Right cardiac atrium (tissue), 5 donors: ENCODE measurements at regions of chr9 and their contacts with region 1.

Region 1: DNA sequence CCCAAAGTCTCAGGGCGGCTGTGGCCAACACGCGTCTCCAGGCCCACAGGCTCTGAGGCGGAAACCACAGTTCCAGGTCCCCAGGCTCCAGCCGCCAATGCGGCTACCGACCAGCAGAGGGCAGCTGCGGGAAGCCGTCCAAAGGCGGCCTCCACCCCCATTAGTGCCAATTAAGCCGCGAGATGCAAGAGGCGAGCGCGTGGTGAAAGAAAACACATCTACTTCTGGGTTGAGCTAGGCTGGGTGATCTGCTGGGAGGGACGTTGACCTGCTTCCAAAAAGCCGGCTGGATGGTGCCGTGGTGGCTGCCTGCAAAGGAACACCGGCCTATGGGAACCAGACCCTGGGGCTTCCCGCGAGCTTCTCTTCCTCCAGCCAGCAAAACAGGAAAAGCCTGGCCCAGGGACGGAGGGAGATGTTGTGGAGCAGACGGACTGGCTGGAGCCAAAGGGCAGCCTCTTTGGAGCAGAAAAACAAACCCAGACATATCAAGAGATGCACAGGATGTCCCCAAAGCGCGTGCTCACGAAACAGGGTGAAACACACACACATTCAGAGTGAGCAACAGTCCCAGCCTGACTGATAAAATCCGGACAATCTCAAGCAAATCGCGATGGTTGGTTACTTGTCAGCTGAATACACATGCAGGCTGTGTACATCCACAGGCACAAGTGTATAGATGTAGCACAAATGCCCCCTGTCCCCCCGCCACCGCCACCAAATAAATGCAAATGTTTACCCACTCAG is 187.1 kb upstream of the BRINP1 start:
- DNase-seq: peak; percentile 76 to 91 (median 91)
- ATAC-seq: peak; percentile 93 to 96
- H3K4me3 ChIP-seq: peak overlapping the region; percentile 4
- H3K27ac ChIP-seq: peak overlapping the region; percentile 18
- H3K4me1 ChIP-seq: no peaks in the 10 kb centered on the region
- H3K27me3 ChIP-seq: no peaks in the 10 kb centered on the region

Region 2: GRCh38 chr9:119126040-119126439 is 430.3 kb before region 1 on chr9:
- intact Hi-C with region 1: no loop called
- DNase-seq: no peak
- ATAC-seq: no peak
- H3K4me3 ChIP-seq: no peak overlapping the region
- H3K27ac ChIP-seq: no peak overlapping the region
- H3K4me1 ChIP-seq: no peaks in the 10 kb centered on the region
- H3K27me3 ChIP-seq: no peaks in the 10 kb centered on the region

Region 3: DNA sequence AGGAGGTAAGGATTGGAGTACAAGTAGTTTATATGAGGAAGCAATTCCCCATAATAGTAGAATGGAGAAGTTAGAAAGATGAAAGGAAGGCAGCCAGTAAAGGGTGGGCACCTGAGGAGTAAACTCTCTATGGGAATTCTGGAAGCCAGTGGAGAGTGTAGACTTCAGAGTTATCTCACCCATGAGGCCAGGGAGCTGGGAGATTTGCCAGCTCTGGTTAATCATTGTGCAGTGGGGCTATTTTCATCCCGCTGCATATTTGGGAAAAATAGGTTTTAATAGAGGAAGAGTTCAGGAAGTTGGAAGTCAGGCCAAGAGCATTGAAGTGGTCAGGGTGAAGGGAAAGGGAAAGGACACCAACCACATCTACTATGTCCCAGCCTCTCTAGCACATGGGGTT is 55.3 kb after region 1 on chr9:
- intact Hi-C with region 1: no loop called
- DNase-seq: no peak
- ATAC-seq: no peak
- H3K4me3 ChIP-seq: no peak overlapping the region
- H3K27ac ChIP-seq: no peak overlapping the region
- H3K4me1 ChIP-seq: no peaks in the 10 kb centered on the region
- H3K27me3 ChIP-seq: no peaks in the 10 kb centered on the region

Region 4: GRCh38 chr9:119839888-119840287 is 283.6 kb after region 1 on chr9:
- intact Hi-C with region 1: no loop called
- DNase-seq: peak in 1 of 3 donors; percentile 26
- ATAC-seq: no peak
- H3K4me3 ChIP-seq: no peak overlapping the region
- H3K27ac ChIP-seq: no peak overlapping the region
- H3K4me1 ChIP-seq: no peaks in the 10 kb centered on the region
- H3K27me3 ChIP-seq: no peaks in the 10 kb centered on the region

Region 5: GRCh38 chr9:119968836-119969707 is 412.8 kb after region 1 on chr9:
- intact Hi-C with region 1: loop called in 3 of 4 experiments (anchors 5 to 10 kb)
- DNase-seq: peak; percentile 76 to 91 (median 89)
- ATAC-seq: peak; percentile 92 to 95
- H3K4me3 ChIP-seq: no peak overlapping the region
- H3K27ac ChIP-seq: no peak overlapping the region
- H3K4me1 ChIP-seq: no peaks in the 10 kb centered on the region
- H3K27me3 ChIP-seq: no peaks in the 10 kb centered on the region

Region 6: DNA sequence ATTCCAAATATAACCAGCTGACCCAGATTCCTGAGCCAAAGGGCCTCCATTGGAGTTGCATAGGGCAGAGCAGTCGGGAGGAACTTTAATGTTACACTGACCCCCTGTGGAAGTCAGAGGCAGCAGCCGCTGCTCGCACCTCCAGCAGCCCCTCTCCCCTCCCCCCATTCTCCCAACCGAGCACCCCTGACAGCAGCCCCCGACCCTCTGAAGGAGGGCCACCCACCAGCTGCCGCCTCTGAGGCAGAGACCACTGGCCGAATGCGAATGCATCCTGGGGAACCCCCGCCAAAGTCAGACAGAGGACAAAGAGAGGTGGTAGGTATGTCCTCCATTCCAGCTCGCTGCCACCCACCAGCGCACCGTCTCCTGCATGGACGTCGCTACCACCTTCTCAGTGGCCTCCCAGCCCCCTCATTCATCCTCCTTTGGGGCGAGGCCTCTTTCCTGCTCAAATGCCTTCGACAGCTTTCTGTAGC is 792.7 kb after region 1 on chr9:
- intact Hi-C with region 1: loop called in 3 of 4 experiments (anchors 5 to 10 kb)
- DNase-seq: peak; percentile 32 to 63 (median 50)
- ATAC-seq: peak; percentile 76 to 86
- H3K4me3 ChIP-seq: no peak overlapping the region
- H3K27ac ChIP-seq: no peak overlapping the region
- H3K4me1 ChIP-seq: no peaks in the 10 kb centered on the region
- H3K27me3 ChIP-seq: no peaks in the 10 kb centered on the region

Region 7: DNA sequence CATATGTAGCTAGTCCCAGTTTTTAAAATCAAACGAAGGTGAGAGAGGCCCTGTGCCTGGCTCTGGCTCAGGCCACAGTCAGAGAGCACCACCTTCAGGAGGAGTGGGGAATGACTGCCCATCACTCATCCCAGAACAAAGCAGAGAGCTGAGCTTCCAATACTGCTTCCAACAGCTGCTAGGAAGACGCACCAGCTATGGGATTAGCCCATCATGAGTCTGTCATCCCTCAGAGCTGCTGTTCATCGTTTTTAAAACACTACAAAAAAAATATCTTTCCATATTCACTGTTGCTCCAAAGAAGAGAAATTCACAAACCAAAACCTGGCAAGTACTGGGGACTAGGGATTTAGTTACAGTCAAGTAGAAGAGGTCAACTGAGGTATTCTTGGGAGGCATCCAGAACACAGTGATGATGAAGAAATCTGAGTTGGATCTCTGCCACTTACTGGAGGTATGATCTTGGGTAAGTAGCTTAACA is 921.3 kb after region 1 on chr9:
- intact Hi-C with region 1: loop called in 1 of 4 experiments (anchors 10 kb)
- DNase-seq: peak; percentile 58 to 80 (median 76)
- ATAC-seq: peak; percentile 83 to 86
- H3K4me3 ChIP-seq: no peak overlapping the region
- H3K27ac ChIP-seq: no peak overlapping the region
- H3K4me1 ChIP-seq: no peaks in the 10 kb centered on the region
- H3K27me3 ChIP-seq: no peaks in the 10 kb centered on the region